CD8-positive, alpha-beta T cell (primary cell): ENCODE measurements at regions of chr1 and their contacts with region 1.

Region 1: GRCh38 chr1:159077120-159077961 is 775 bp upstream of the AIM2 start:
- DNase-seq: peak; percentile 56 to 91 (median 73)
- ATAC-seq: peak; percentile 78
- H3K4me3 ChIP-seq: peak overlapping the region in 1 of 2 experiments; percentile 44
- H3K4me3 Mint-ChIP-seq: peak overlapping the region; percentile 76
- H3K27ac ChIP-seq: peak overlapping the region; percentile 31 to 93
- H3K27ac Mint-ChIP-seq: peak overlapping the region; percentile 94
- H3K4me1 ChIP-seq: no peaks in the 10 kb centered on the region
- H3K4me1 Mint-ChIP-seq: peaks cover 14% of the 10 kb centered on the region
- H3K27me3 ChIP-seq: no peaks in the 10 kb centered on the region
- H3K27me3 Mint-ChIP-seq: no peaks in the 10 kb centered on the region
- CTCF ChIP-seq: no peak

Region 2: GRCh38 chr1:158830904-158831507 is 246.3 kb before region 1 on chr1 and contains the start of gene MNDA:
- CTCF ChIA-PET with region 1: no interaction called
- POLR2A ChIA-PET with region 1: no interaction called
- intact Hi-C with region 1: no loop called
- DNase-seq: peak in 1 of 9 experiments; percentile 13
- ATAC-seq: no peak
- H3K4me3 ChIP-seq: no peak within 1 kb of the TSS
- H3K4me3 Mint-ChIP-seq: no peak within 1 kb of the TSS
- H3K27ac ChIP-seq: peak within 1 kb of the TSS in 1 of 2 experiments; percentile 11
- H3K27ac Mint-ChIP-seq: no peak within 1 kb of the TSS
- H3K4me1 ChIP-seq: no peaks in the 10 kb centered on the region
- H3K4me1 Mint-ChIP-seq: peaks cover 4% of the 10 kb centered on the region
- H3K27me3 ChIP-seq: no peaks in the 10 kb centered on the region
- H3K27me3 Mint-ChIP-seq: peaks cover 2% of the 10 kb centered on the region
- CTCF ChIP-seq: no peak
- total RNA-seq, gene MNDA: not detected

Region 3: DNA sequence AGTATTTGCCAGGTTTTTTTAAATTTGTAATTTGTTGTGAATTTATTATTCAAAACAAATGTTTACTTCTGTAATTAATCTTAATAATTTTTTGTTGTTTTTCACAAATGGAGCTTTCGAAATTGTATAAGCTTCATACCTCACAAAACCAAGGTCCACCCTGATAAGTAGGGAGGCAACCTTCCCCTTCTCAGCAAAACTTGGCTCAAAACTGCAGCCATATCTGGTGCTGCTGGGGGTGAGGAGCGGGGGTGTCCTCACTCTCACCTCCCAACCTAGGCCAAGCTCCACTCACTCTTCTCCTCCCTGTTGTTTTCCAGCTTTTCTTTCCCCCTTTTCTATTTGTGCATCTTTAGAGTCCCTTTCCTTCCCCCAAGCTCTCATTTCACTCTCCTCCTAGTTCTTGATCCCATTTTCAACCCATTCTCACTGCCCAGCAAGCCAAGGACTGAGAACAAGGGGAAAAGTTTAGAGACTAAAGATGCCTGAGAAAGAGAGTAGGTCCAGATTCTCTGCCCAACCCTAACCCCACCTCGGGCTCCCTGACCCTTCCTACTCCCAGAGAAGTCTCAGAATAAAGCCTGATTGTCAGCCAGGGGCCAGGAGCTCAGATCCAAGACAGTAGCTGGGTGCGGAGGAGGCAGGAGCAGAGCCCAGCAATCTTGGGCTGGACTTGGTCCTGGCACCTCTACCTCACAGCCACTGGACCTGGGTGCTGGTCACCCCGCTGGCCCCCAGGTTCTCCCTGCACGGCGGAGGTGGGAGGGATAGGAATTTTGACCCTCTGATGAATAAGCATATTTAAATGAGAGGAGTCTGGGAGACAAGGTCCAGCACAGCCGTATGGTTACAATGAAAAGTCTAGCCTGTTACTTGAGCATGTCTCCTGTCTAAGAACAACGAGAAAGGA is 830.9 kb after region 1 on chr1:
- CTCF ChIA-PET with region 1: no interaction called
- POLR2A ChIA-PET with region 1: no interaction called
- intact Hi-C with region 1: loop called in 1 of 2 experiments (anchors 5 kb)
- DNase-seq: no peak
- ATAC-seq: no peak
- H3K4me3 ChIP-seq: no peak overlapping the region
- H3K4me3 Mint-ChIP-seq: no peak overlapping the region
- H3K27ac ChIP-seq: no peak overlapping the region
- H3K27ac Mint-ChIP-seq: peak overlapping the region; percentile 0
- H3K4me1 ChIP-seq: peaks cover 32% of the 10 kb centered on the region
- H3K4me1 Mint-ChIP-seq: peaks cover 52% of the 10 kb centered on the region
- H3K27me3 ChIP-seq: no peaks in the 10 kb centered on the region
- H3K27me3 Mint-ChIP-seq: no peaks in the 10 kb centered on the region
- CTCF ChIP-seq: no peak